Dorsolateral prefrontal cortex (tissue), 120 donors: ENCODE measurements at regions of chr17 and their contacts with region 1.

Region 1: DNA sequence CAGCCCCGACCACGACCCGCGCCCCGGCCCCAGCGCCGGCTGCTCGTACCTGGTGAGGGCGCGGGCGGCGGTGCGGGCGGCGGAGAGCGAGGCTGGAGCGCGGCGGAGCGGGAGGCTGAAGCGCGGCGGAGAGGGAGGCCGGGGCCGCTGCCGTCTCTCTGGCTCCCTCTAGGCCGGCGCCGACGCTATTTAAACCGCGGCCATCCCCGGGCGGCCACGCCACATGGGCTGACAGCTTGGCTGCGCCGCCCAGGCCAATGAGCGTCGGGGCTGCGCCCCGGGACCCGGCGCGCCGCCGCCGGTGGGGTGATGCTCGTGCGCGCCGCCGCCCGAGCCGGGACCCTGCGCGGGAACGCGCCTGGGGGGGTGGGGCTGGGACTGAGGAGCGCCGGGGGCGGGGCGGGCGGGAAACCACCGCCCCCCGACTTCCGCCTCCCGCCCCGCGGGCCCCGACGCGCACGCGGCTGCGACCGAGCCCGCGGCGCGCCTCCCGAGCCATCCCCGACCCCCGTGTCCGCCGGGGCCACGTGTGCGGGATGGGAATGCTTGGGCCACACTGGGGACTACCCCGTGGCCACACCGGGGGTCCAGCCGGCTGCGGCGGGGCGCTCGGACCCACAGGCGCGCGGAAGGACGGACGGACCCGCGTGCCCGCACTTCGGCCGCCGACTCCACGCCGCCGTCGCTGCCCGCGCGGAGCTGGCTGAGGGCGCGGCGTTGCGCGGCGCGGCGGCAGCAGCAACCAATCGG is at the start of gene FASN:
- DNase-seq: peak; percentile 81 to 94 (median 91)
- H3K4me3 ChIP-seq: peak within 1 kb of the TSS; percentile 64 to 98 (median 86)
- H3K27ac ChIP-seq: peak within 1 kb of the TSS; percentile 61 to 98 (median 95)
- H3K27me3 ChIP-seq: no peaks in the 10 kb centered on the region
- CTCF ChIP-seq: peak in 49 of 56 donors; percentile 6 to 65 (median 42)
- total RNA-seq, gene FASN: 137 to 275 (median 201) TPM

Region 2: GRCh38 chr17:82037113-82037888 is 60.9 kb before region 1 on chr17 and contains the start of gene DCXR:
- intact Hi-C with region 1: loop called (anchors 1 kb)
- DNase-seq: peak; percentile 97 to 99 (median 98)
- H3K4me3 ChIP-seq: peak within 1 kb of the TSS; percentile 51 to 97 (median 82)
- H3K27ac ChIP-seq: peak within 1 kb of the TSS; percentile 52 to 99 (median 94)
- H3K27me3 ChIP-seq: no peaks in the 10 kb centered on the region
- CTCF ChIP-seq: peak; percentile 17 to 87 (median 67)
- total RNA-seq, gene DCXR: 80.1 to 213 (median 127) TPM

Region 3: DNA sequence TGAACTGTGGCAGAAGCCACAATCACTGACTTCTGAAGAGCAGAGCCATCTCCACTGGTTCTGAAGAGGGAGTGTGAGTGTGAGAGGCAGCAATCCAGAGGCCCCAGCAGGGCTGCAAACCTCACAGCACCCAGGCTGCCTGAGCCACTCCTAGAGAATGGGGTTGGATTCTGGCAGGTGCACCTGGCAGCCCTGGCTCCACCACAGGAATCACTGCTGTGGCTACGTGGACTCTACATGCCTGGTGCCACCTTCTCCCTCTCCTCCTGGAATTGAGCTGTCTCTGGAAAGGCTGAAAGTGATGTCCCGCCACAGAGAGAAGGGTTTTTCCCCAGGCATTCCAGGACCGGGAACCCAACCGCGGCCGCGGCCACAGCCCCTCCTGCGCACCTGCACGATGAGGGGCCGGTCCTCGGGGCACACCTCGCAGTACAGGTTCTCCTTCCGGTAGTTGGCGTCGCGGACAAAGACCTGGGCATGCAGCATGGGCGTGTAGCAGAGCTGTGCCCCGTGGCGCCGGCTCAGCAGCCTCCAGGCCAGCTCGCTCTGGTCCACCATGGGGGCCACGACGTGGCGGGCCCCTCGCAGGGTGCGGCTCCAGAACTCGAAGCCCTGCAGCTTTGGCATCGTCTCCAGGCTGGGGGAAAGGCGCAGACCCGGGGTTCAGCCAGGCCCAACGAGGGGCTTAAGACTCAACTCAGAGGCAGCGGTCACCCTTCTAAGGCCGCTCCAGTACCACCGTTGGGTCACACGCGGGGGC is 33.6 kb before region 1 on chr17:
- intact Hi-C with region 1: loop called in 1 of 2 experiments (anchors 5 kb)
- DNase-seq: no peak
- H3K4me3 ChIP-seq: peak overlapping the region; percentile 71 to 98 (median 87)
- H3K27ac ChIP-seq: peak overlapping the region in 33 of 59 donors; percentile 4 to 92 (median 77)
- H3K27me3 ChIP-seq: no peaks in the 10 kb centered on the region
- CTCF ChIP-seq: no peak

Region 4: GRCh38 chr17:82351716-82352488 is 253.7 kb after region 1 on chr17:
- intact Hi-C with region 1: no loop called
- DNase-seq: peak; percentile 71 to 90 (median 84)
- H3K4me3 ChIP-seq: peak overlapping the region in 10 of 59 donors; percentile 2 to 33 (median 24)
- H3K27ac ChIP-seq: no peak overlapping the region
- H3K27me3 ChIP-seq: peaks cover 0 to 37% (median 10%) of the 10 kb centered on the region in 45 donors
- CTCF ChIP-seq: peak; percentile 94 to 99 (median 97)